ENCODE measurements at regions of chr4 and their contacts with region 1.

Region 1: GRCh38 chr4:158172261-158173258 is at the start of gene GASK1B:
- DNase-seq: peak; percentile 50
- H3K4me3 ChIP-seq: peak within 1 kb of the TSS in 3 of 4 donors; percentile 25 to 37 (median 33)
- H3K27ac ChIP-seq: peak within 1 kb of the TSS; percentile 70 to 82 (median 78)
- H3K4me1 ChIP-seq: peaks cover 0 to 36% (median 16%) of the 10 kb centered on the region in 4 donors
- H3K27me3 ChIP-seq: no peaks in the 10 kb centered on the region
- CTCF ChIP-seq: peak; percentile 56 to 70 (median 63)
- EP300 ChIP-seq: no peak
- POLR2A ChIP-seq: no peak
- total RNA-seq, gene GASK1B: 7.9 to 22.5 (median 14.1) TPM

Region 2: GRCh38 chr4:157978680-157979361 is 193.7 kb before region 1 on chr4:
- in situ Hi-C with region 1: loop called in 1 of 4 experiments (anchors 25 kb)
- intact Hi-C with region 1: no loop called
- DNase-seq: peak; percentile 8
- H3K4me3 ChIP-seq: peak overlapping the region in 1 of 4 donors; percentile 1
- H3K27ac ChIP-seq: no peak overlapping the region
- H3K4me1 ChIP-seq: peaks cover 0 to 7% (median 0%) of the 10 kb centered on the region in 4 donors
- H3K27me3 ChIP-seq: no peaks in the 10 kb centered on the region
- CTCF ChIP-seq: peak; percentile 74 to 85 (median 82)
- EP300 ChIP-seq: no peak
- POLR2A ChIP-seq: no peak

Region 3: DNA sequence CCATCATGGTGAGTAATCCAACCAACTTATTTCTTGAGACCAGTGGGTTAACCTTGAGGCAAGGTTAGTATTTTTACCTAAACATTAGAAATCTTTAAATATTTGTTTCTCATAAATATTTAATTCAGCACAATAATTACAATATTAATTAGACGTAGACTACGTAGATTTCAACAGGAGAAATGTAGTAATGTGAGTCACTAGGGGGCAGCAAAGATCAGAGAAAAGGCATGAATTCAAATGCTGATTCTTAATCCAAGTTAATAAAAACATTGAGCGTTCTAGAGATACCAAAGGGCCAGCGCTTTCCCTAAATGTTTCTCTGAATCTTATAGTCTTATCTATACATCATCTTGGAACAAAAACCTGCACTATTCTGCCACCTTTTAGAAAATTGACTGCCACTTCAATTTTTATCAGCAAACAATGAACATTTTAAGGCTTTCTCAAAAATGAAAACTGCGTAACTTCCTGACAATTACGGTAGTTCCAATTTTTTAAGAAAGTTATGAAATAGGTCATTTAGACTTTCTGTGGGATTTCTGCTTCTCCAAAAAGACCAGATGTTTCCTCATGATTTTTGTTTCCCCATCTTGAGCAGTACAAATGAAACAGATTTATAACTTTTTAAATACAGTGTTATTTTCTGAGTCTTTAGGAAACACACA is 180.4 kb before region 1 on chr4:
- in situ Hi-C with region 1: loop called in 2 of 4 experiments (anchors 5 to 25 kb)
- intact Hi-C with region 1: loop called (anchors 2 kb)
- DNase-seq: no peak
- H3K4me3 ChIP-seq: peak overlapping the region in 2 of 4 donors; percentile 2 to 39
- H3K27ac ChIP-seq: peak overlapping the region; percentile 37 to 72 (median 52)
- H3K4me1 ChIP-seq: peaks cover 0 to 33% (median 6%) of the 10 kb centered on the region in 4 donors
- H3K27me3 ChIP-seq: no peaks in the 10 kb centered on the region
- CTCF ChIP-seq: peak; percentile 67 to 84 (median 72)
- EP300 ChIP-seq: no peak
- POLR2A ChIP-seq: no peak